Adrenal gland (tissue), 19 donors: ENCODE measurements at regions of chr11 and their contacts with region 1.

Region 1: DNA sequence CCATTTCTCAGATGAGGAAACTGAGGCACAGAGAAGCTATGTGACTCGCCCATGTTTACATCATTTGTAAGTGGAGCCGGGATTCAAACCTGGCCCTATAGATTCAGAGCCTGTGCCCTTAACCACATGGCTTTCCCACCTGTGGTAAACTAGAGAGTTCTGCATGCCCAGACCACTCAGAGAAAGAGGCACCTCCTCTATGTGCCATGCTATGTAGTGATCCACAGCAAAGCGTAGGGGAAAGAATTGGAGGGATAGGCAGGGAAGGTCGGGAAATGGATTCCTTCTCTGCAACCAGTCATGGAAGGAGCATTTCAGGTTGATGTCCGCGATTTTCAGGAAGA is 15.4 kb upstream of the POU2AF2 start:
- DNase-seq: no peak
- H3K4me3 ChIP-seq: peak overlapping the region in 1 of 4 donors; percentile 63
- H3K27ac ChIP-seq: no peak overlapping the region
- H3K4me1 ChIP-seq: no peaks in the 10 kb centered on the region
- H3K27me3 ChIP-seq: no peaks in the 10 kb centered on the region
- CTCF ChIP-seq: no peak
- POLR2A ChIP-seq: no peak

Region 2: DNA sequence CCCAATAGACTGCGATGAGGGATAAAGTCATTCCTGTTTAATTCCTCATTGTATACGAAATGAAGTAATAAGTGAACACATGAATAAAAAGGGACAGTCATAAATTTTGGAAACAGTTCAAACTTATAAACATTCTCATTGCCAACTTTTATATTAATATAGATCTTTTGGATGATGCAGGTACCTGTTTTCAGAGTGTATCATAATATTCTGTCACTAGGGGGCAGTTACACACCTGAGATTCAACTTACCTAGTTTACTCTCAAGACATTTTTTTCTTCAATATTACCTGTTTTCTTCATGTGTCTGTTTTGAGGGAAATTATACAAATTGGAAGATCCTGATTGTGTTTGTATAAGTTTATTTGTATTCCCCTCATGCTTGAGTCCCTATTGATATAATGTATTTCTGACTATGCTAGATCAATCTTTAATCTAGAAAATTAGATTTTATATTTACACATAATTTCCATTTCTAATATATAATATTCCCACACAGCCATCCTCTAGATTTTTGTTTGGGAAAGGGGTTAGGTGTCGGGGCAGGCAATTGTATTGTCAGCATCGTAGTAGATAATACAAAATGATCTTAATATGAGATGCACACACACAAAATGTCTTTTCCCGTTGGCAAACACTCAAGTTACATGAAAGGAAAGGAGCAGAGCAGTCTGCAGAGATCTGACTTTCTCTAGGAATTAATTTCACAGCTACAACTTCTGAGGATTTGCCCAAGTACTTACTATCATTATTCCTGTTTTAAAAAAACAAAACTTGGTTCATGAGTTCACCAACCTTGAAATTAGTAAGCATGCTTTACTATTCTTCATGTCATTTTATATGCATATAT is 782.0 kb before region 1 on chr11:
- intact Hi-C with region 1: loop called in 1 of 2 experiments (anchors 10 kb)
- DNase-seq: no peak
- H3K4me3 ChIP-seq: no peak overlapping the region
- H3K27ac ChIP-seq: no peak overlapping the region
- H3K4me1 ChIP-seq: peaks cover 23 to 67% of the 10 kb centered on the region in 2 donors
- H3K27me3 ChIP-seq: no peaks in the 10 kb centered on the region
- CTCF ChIP-seq: peak in 4 of 6 experiments; percentile 28 to 49 (median 40)
- POLR2A ChIP-seq: no peak

Region 3: DNA sequence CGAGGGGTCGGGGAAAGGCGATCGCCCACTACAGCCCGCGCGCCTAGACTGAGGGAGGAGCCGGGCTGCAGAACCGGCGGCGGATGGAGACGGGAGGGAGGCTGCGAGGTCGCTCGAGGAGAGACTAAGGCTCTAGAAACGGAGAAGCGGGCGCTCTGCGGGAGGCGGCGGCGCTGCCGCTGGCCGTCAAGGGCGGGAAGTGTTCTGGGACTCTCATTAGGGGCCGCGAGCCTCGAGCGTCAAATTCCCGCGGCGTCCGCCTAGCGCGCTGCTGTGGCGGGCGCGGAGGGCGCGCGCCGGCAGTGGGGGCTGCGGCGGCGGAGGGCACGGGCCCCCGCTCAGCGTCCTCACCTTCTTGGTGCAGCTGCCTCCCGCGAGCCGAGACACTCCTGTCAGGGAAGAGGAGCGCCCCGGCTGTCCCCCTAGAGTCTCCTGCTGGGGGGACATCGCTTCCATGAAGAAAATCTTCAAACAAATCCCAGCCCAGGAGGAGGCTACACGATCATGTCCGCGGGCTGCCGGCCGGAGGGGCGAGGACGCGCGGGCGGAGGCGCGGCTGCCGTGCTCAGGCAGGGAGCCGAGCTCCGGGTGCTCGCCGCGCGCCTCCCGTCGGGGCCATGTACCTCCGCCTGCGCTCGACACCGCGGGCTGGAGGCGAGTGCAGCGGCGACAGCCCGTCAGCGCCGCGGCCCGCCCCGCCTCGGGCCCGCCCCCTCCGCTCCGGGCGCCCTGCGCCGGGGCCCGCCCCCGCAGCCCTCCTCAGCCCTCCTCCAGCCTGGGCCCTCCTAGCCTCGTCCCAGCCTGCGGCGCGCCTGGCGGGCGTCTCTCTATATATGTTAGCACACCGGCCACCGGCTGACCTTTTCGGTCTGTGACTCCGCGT is 518.1 kb before region 1 on chr11 and contains the start of gene ARHGAP20:
- intact Hi-C with region 1: loop called in 1 of 2 experiments (anchors 10 kb)
- DNase-seq: peak; percentile 72 to 79 (median 74)
- H3K4me3 ChIP-seq: peak within 1 kb of the TSS; percentile 39 to 85 (median 54)
- H3K27ac ChIP-seq: peak within 1 kb of the TSS in 4 of 5 donors; percentile 15 to 87 (median 72)
- H3K4me1 ChIP-seq: peaks cover 0 to 21% of the 10 kb centered on the region in 2 donors
- H3K27me3 ChIP-seq: no peaks in the 10 kb centered on the region
- CTCF ChIP-seq: peak in 1 of 6 experiments; percentile 18
- POLR2A ChIP-seq: peak in 1 of 2 donors; percentile 80
- total RNA-seq, gene ARHGAP20: 1.6 to 8.2 (median 4.0) TPM

Region 4: GRCh38 chr11:111308140-111308539 is 78.0 kb after region 1 on chr11:
- intact Hi-C with region 1: no loop called
- DNase-seq: no peak
- H3K4me3 ChIP-seq: no peak overlapping the region
- H3K27ac ChIP-seq: no peak overlapping the region
- H3K4me1 ChIP-seq: no peaks in the 10 kb centered on the region
- H3K27me3 ChIP-seq: no peaks in the 10 kb centered on the region
- CTCF ChIP-seq: no peak
- POLR2A ChIP-seq: no peak